ENCODE measurements at regions of chr9 and their contacts with region 1.

Region 1: DNA sequence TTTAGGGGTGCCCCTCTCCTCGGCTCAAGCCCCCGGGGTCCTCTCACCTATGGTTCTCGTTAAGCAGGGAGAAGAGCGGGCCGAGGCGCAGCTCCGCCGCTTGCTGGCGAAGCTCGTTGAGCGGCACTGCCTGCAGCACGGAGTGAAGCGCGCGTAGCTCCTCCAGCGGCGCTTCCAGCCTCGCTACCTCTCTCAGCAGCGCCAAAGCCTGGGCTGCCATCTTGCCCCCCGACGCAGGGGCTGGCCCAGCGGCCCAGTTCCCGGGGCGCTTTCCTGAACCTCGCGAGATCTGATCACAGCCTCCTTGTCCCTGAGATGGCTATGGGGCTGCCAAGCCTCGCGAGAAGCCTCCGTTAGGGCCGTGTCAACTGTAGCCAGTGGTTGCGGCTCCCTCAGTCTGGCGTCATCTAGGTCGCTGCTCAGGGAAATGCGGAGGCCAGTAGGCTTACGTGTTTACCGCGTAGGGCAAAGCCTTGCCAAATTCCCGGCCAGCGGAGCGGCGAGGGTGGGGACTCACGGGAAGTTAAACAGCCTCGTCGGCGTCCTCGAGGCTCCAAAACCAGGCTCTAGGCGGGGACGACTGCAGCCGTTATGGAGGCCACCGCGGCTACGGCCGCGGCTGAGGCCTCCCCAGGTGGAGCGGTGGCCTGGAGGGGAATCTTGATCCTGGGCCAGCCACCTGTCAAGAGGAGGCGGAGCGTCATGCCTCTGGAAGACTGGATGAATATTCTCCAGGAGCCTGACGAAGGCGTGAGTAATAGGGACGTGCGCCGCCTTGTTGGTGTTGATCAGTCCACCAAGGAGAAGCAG is at the start of gene PSMD5:
- DNase-seq: peak; percentile 99
- H3K4me3 Mint-ChIP-seq: peak within 1 kb of the TSS; percentile 97
- H3K27ac Mint-ChIP-seq: peak within 1 kb of the TSS; percentile 96
- H3K4me1 Mint-ChIP-seq: peaks cover 67% of the 10 kb centered on the region
- H3K27me3 Mint-ChIP-seq: no peaks in the 10 kb centered on the region
- total RNA-seq, gene PSMD5: 58.1 and 63.7 TPM in 2 replicates

Region 2: GRCh38 chr9:120579750-120580590 is 262.9 kb before region 1 on chr9 and contains the start of gene CDK5RAP2:
- intact Hi-C with region 1: loop called (anchors 5 kb)
- DNase-seq: peak; percentile 98
- H3K4me3 Mint-ChIP-seq: peak within 1 kb of the TSS; percentile 98
- H3K27ac Mint-ChIP-seq: peak within 1 kb of the TSS; percentile 94
- H3K4me1 Mint-ChIP-seq: peaks cover 36% of the 10 kb centered on the region
- H3K27me3 Mint-ChIP-seq: no peaks in the 10 kb centered on the region
- total RNA-seq, gene CDK5RAP2: 69.3 and 70.0 TPM in 2 replicates

Region 3: DNA sequence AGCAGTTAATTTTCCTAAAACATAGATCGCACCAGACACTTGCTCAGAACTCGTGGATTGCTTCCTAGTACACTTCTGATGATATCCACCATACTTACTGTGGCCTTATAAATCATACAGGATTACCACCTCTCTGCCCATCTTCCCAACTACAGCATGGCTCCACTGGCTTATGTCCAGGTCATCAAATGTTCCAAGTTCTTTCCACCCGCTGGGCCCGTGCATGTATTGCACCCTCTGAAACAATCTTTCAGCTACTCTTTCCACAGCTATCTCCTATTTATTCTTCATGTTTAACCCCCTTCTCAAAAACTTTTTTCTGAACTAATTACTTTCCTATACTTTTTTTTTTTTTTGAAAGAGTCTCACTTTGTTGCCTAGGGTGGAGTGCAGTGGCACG is 68.2 kb before region 1 on chr9:
- intact Hi-C with region 1: loop called (anchors 5 kb)
- DNase-seq: no peak
- H3K4me3 Mint-ChIP-seq: no peak overlapping the region
- H3K27ac Mint-ChIP-seq: peak overlapping the region; percentile 13
- H3K4me1 Mint-ChIP-seq: peaks cover 17% of the 10 kb centered on the region
- H3K27me3 Mint-ChIP-seq: no peaks in the 10 kb centered on the region

Region 4: GRCh38 chr9:120875954-120876841 is 33.3 kb after region 1 on chr9:
- intact Hi-C with region 1: loop called (anchors 1 kb)
- DNase-seq: peak; percentile 96
- H3K4me3 Mint-ChIP-seq: peak overlapping the region; percentile 97
- H3K27ac Mint-ChIP-seq: peak overlapping the region; percentile 97
- H3K4me1 Mint-ChIP-seq: peaks cover 73% of the 10 kb centered on the region
- H3K27me3 Mint-ChIP-seq: no peaks in the 10 kb centered on the region

Region 5: GRCh38 chr9:120936011-120936763 is 93.3 kb after region 1 on chr9:
- intact Hi-C with region 1: loop called (anchors 1 kb)
- DNase-seq: peak; percentile 96
- H3K4me3 Mint-ChIP-seq: peak overlapping the region; percentile 68
- H3K27ac Mint-ChIP-seq: peak overlapping the region; percentile 89
- H3K4me1 Mint-ChIP-seq: peaks cover 55% of the 10 kb centered on the region
- H3K27me3 Mint-ChIP-seq: peaks cover 5% of the 10 kb centered on the region

Region 6: GRCh38 chr9:121201738-121202533 is 359.0 kb after region 1 on chr9 and contains the start of gene RAB14:
- intact Hi-C with region 1: loop called (anchors 1 kb)
- DNase-seq: peak; percentile 100
- H3K4me3 Mint-ChIP-seq: peak within 1 kb of the TSS; percentile 94
- H3K27ac Mint-ChIP-seq: peak within 1 kb of the TSS; percentile 91
- H3K4me1 Mint-ChIP-seq: peaks cover 40% of the 10 kb centered on the region
- H3K27me3 Mint-ChIP-seq: peaks cover 3% of the 10 kb centered on the region
- total RNA-seq, gene RAB14: 61.4 and 65.1 TPM in 2 replicates